CD8-positive, alpha-beta T cell (primary cell): ENCODE measurements at regions of chr22 and their contacts with region 1.

Region 1: DNA sequence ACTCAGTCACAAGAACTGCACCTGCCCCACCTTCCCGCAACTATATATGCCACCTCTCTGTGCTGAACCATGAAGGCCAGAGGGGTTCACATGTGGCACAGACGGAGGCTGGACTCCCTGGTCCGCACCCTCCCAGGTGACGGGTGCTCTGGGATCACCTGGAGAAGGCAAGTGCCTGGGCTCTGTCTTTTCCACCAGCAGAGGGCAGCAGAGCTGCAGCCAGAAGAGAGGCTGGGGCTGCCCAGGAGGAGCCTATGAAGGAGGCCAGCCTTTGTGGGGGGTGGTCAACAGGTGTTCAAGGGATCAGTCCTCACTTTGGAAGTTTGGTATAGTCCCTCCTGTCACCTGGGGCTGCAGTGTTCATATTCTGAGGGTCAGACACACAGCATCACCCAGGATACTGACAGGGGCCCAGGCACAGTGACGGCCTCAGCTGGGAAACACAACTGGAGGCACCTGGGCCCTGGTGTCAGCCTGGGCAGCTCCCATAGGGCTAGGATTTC is 39.2 kb upstream of the IGLL5 start:
- DNase-seq: peak; percentile 39 to 85 (median 72)
- ATAC-seq: peak; percentile 83
- H3K4me3 ChIP-seq: no peak overlapping the region
- H3K4me3 Mint-ChIP-seq: no peak overlapping the region
- H3K27ac ChIP-seq: no peak overlapping the region
- H3K27ac Mint-ChIP-seq: no peak overlapping the region
- H3K4me1 ChIP-seq: peaks cover 16% of the 10 kb centered on the region
- H3K4me1 Mint-ChIP-seq: peaks cover 46% of the 10 kb centered on the region
- H3K27me3 ChIP-seq: no peaks in the 10 kb centered on the region
- H3K27me3 Mint-ChIP-seq: no peaks in the 10 kb centered on the region
- CTCF ChIP-seq: peak; percentile 80

Region 2: GRCh38 chr22:22753526-22754267 is 94.7 kb before region 1 on chr22:
- CTCF ChIA-PET with region 1: interaction called, 42 read pairs
- POLR2A ChIA-PET with region 1: interaction called, 4 read pairs
- intact Hi-C with region 1: loop called in 1 of 2 experiments (anchors 1 kb)
- DNase-seq: peak; percentile 63 to 90 (median 83)
- ATAC-seq: peak; percentile 85
- H3K4me3 ChIP-seq: peak overlapping the region in 1 of 2 experiments; percentile 25
- H3K4me3 Mint-ChIP-seq: peak overlapping the region; percentile 60
- H3K27ac ChIP-seq: peak overlapping the region; percentile 44 to 69
- H3K27ac Mint-ChIP-seq: peak overlapping the region; percentile 94
- H3K4me1 ChIP-seq: peaks cover 44% of the 10 kb centered on the region
- H3K4me1 Mint-ChIP-seq: peaks cover 66% of the 10 kb centered on the region
- H3K27me3 ChIP-seq: no peaks in the 10 kb centered on the region
- H3K27me3 Mint-ChIP-seq: no peaks in the 10 kb centered on the region
- CTCF ChIP-seq: peak; percentile 70

Region 3: DNA sequence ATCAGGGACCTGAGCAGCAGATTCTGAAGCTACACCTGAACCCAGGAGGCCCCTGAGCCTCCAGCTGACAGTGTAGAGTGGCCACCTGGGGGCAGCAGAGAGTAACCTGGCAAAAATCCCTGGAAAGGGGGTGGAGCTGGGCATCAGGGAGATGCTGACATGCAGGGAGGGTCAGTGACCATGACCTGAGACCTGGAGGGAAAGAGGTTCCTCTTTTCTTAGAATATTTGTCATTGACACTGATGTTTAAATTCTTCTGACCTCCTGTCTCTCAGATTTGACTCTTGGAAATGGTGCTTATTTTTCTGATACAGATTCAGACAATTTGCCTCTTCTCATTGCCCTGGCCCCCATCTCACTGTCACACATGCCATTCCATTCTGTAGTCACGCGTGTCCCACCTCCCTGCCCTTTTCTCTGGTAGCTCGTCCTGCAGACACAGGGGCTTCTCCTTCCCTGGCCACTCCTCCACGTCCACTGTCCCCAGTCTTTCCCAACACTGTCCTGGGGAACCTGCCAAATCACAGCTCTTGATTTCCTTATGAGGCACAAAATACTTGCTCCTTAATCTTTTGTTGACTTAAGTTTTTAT is 78.0 kb before region 1 on chr22:
- CTCF ChIA-PET with region 1: interaction called, 17 read pairs
- POLR2A ChIA-PET with region 1: no interaction called
- intact Hi-C with region 1: no loop called
- DNase-seq: peak in 6 of 9 experiments; percentile 41 to 66 (median 59)
- ATAC-seq: peak; percentile 70
- H3K4me3 ChIP-seq: no peak overlapping the region
- H3K4me3 Mint-ChIP-seq: no peak overlapping the region
- H3K27ac ChIP-seq: peak overlapping the region in 1 of 2 experiments; percentile 60
- H3K27ac Mint-ChIP-seq: peak overlapping the region; percentile 73
- H3K4me1 ChIP-seq: no peaks in the 10 kb centered on the region
- H3K4me1 Mint-ChIP-seq: peaks cover 56% of the 10 kb centered on the region
- H3K27me3 ChIP-seq: no peaks in the 10 kb centered on the region
- H3K27me3 Mint-ChIP-seq: no peaks in the 10 kb centered on the region
- CTCF ChIP-seq: peak; percentile 74

Region 4: GRCh38 chr22:22810018-22810427 is 38.4 kb before region 1 on chr22:
- CTCF ChIA-PET with region 1: interaction called, 248 read pairs
- POLR2A ChIA-PET with region 1: interaction called, 4 read pairs
- intact Hi-C with region 1: loop called in 1 of 2 experiments (anchors 1 kb)
- DNase-seq: peak; percentile 57 to 89 (median 70)
- ATAC-seq: peak; percentile 84
- H3K4me3 ChIP-seq: no peak overlapping the region
- H3K4me3 Mint-ChIP-seq: peak overlapping the region; percentile 37
- H3K27ac ChIP-seq: peak overlapping the region in 1 of 2 experiments; percentile 55
- H3K27ac Mint-ChIP-seq: peak overlapping the region; percentile 49
- H3K4me1 ChIP-seq: peaks cover 21% of the 10 kb centered on the region
- H3K4me1 Mint-ChIP-seq: peaks cover 53% of the 10 kb centered on the region
- H3K27me3 ChIP-seq: no peaks in the 10 kb centered on the region
- H3K27me3 Mint-ChIP-seq: no peaks in the 10 kb centered on the region
- CTCF ChIP-seq: peak; percentile 64

Region 5: GRCh38 chr22:22838148-22838786 is 10.1 kb before region 1 on chr22:
- CTCF ChIA-PET with region 1: interaction called, 34 read pairs
- POLR2A ChIA-PET with region 1: no interaction called
- intact Hi-C with region 1: no loop called
- DNase-seq: peak in 1 of 9 experiments; percentile 25
- ATAC-seq: no peak
- H3K4me3 ChIP-seq: no peak overlapping the region
- H3K4me3 Mint-ChIP-seq: no peak overlapping the region
- H3K27ac ChIP-seq: peak overlapping the region in 1 of 2 experiments; percentile 31
- H3K27ac Mint-ChIP-seq: peak overlapping the region; percentile 30
- H3K4me1 ChIP-seq: peaks cover 12% of the 10 kb centered on the region
- H3K4me1 Mint-ChIP-seq: peaks cover 31% of the 10 kb centered on the region
- H3K27me3 ChIP-seq: no peaks in the 10 kb centered on the region
- H3K27me3 Mint-ChIP-seq: no peaks in the 10 kb centered on the region
- CTCF ChIP-seq: no peak

Region 6: DNA sequence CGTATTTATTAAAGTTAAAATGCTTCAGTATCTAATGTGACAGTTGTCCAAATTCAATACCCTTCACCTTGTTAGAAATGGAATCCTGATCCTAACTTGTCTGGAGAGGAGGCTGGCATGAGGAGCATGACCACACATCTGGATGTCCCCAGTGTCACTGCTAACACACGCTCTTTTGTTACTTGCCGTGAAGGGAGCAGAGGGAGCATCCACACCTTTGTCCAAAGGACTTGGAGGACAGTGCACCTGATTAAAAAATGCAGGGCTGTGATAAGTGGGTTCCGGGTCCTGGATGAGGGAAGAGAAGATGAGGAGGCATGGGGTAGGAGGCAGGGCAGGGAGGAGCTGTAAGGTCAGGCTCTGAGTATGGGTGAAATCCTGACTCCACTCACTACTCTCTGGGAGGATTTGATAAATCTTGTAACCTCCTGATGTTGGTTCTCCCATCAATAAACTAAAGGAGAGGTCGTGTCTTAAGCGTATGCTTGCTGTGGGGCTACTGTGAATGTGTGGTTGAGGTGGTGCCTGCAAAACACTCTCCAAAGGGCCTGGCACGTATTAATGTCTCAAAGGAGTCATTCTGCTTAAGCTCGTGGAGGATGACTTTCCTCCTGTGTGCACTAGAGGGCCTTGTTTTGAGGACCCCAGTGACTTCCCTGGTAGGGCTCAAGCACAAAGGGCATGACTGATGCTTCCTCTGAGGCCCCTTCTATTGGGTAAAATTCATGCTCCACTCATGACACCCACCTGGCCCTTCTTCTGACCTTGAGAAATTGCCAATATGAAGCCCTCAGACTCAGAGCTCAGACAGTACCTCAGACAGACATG is 22.4 kb after region 1 on chr22:
- CTCF ChIA-PET with region 1: interaction called, 16 read pairs
- POLR2A ChIA-PET with region 1: no interaction called
- intact Hi-C with region 1: no loop called
- DNase-seq: peak in 3 of 9 experiments; percentile 29 to 47 (median 46)
- ATAC-seq: no peak
- H3K4me3 ChIP-seq: no peak overlapping the region
- H3K4me3 Mint-ChIP-seq: no peak overlapping the region
- H3K27ac ChIP-seq: no peak overlapping the region
- H3K27ac Mint-ChIP-seq: no peak overlapping the region
- H3K4me1 ChIP-seq: peaks cover 10% of the 10 kb centered on the region
- H3K4me1 Mint-ChIP-seq: peaks cover 26% of the 10 kb centered on the region
- H3K27me3 ChIP-seq: no peaks in the 10 kb centered on the region
- H3K27me3 Mint-ChIP-seq: no peaks in the 10 kb centered on the region
- CTCF ChIP-seq: no peak

Region 7: GRCh38 chr22:22968366-22968765 is 120.0 kb after region 1 on chr22:
- CTCF ChIA-PET with region 1: no interaction called
- POLR2A ChIA-PET with region 1: no interaction called
- intact Hi-C with region 1: no loop called
- DNase-seq: no peak
- ATAC-seq: no peak
- H3K4me3 ChIP-seq: no peak overlapping the region
- H3K4me3 Mint-ChIP-seq: no peak overlapping the region
- H3K27ac ChIP-seq: no peak overlapping the region
- H3K27ac Mint-ChIP-seq: no peak overlapping the region
- H3K4me1 ChIP-seq: no peaks in the 10 kb centered on the region
- H3K4me1 Mint-ChIP-seq: no peaks in the 10 kb centered on the region
- H3K27me3 ChIP-seq: peaks cover 0 to 2% of the 10 kb centered on the region in 2 experiments
- H3K27me3 Mint-ChIP-seq: peaks cover 51% of the 10 kb centered on the region
- CTCF ChIP-seq: no peak